ENCODE measurements at regions of chr19 and their contacts with region 1.

Region 1: GRCh38 chr19:51407511-51408131 is 9.8 kb downstream of the SIGLEC10 start:
- DNase-seq: no peak
- ATAC-seq: peak; percentile 68
- H3K4me3 ChIP-seq: no peak overlapping the region
- H3K27ac ChIP-seq: no peak overlapping the region
- H3K4me1 ChIP-seq: no peaks in the 10 kb centered on the region; the same call in 1 of the 2 replicates
- H3K27me3 ChIP-seq: no peaks in the 10 kb centered on the region
- CTCF ChIP-seq: peak; percentile 72

Region 2: DNA sequence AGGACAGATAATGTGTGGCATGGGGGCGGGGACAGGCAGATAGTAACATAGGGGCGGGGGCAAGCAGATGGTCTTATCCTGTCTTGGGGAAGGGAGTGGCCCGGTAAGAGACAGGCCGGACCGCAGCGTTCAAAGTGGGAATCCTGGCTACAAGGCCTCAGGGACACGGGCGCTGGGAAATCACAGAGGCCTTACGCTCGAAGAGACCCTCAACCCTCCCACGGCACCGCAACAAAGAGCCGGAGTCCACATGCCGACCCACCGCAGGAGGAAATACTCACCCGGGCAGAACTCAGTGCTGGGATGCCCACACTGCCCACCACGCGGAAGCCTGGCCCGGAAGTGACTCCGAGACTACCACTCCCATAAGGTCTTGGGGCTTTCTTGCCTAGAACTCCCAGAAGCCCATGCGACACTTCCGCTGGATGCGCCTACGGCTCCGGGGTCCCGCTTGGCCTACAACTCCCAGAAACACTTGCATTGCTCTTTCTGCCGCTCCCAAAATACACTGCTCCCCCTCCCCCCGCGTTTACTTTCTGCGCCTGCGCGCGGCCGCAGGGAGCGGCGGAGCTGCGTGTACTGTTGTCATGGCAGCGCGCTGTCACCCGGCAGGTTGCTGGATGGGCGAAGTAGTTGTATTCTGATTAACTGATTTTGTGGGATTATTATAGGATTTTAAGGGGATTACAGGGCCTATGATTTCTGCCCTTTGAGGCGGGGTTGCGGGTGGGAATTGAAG is 299.4 kb before region 1 on chr19 and contains the start of gene CTU1:
- CTCF ChIA-PET with region 1: no interaction called
- POLR2A ChIA-PET with region 1: interaction called, 11 read pairs
- in situ Hi-C with region 1: no loop called
- intact Hi-C with region 1: no loop called
- DNase-seq: peak; percentile 88
- ATAC-seq: peak; percentile 99
- H3K4me3 ChIP-seq: peak within 1 kb of the TSS; percentile 76 to 79
- H3K27ac ChIP-seq: peak within 1 kb of the TSS; percentile 78
- H3K4me1 ChIP-seq: 0 out of 2 replicates have a peak, but pooled peaks cover 3% of the 10 kb centered on the region
- H3K27me3 ChIP-seq: no peaks in the 10 kb centered on the region; the same call in 1 of the 2 replicates
- CTCF ChIP-seq: no peak
- total RNA-seq, gene CTU1: 9.3 TPM

Region 3: DNA sequence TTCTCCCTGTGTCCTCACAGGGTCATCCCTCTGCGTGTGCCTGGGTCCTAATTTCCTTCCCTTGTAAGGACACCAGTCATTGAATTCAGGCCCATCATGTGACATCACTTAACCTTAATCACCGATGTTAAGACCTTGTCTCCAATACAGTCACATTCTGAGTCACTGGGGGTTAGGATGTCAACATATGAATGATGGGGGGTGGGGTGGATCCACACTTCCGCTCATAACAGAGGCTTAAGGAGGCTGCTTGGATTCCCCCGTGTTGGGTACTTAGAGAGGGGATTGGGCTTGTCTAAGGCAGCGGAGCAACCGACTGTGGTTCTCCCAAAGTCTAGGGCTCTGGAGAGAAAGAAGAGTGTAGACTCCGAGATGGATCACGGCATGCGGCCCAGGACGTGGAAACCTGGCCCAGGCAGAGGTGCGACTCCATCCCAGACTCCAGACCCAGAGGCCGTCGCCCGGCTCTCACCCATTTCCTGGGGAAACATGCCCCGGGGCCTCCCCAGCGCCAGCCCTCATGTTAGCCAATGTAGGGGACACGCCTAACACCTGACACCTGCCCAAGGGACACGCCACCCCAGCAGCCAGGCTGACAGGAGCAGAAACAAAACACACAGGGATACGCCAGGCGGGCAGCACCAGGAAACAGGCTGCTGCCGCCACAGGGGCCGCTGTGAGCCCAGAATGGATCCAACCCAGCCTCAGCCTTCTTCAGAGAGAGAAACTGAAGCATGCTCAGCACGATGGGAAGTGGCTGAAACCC is 113.2 kb before region 1 on chr19:
- CTCF ChIA-PET with region 1: no interaction called
- POLR2A ChIA-PET with region 1: no interaction called
- in situ Hi-C with region 1: no loop called
- intact Hi-C with region 1: no loop called
- DNase-seq: no peak
- ATAC-seq: no peak
- H3K4me3 ChIP-seq: no peak overlapping the region
- H3K27ac ChIP-seq: no peak overlapping the region
- H3K4me1 ChIP-seq: no peaks in the 10 kb centered on the region
- H3K27me3 ChIP-seq: no peaks in the 10 kb centered on the region; the same call in 1 of the 2 replicates
- CTCF ChIP-seq: no peak

Region 4: GRCh38 chr19:51311351-51312257 is 96.0 kb before region 1 on chr19 and contains the start of gene IGLON5:
- CTCF ChIA-PET with region 1: no interaction called
- POLR2A ChIA-PET with region 1: no interaction called
- in situ Hi-C with region 1: no loop called
- intact Hi-C with region 1: no loop called
- DNase-seq: no peak
- ATAC-seq: no peak
- H3K4me3 ChIP-seq: no peak within 1 kb of the TSS
- H3K27ac ChIP-seq: no peak within 1 kb of the TSS
- H3K4me1 ChIP-seq: no peaks in the 10 kb centered on the region
- H3K27me3 ChIP-seq: no peaks in the 10 kb centered on the region; the same call in 1 of the 2 replicates
- CTCF ChIP-seq: no peak
- total RNA-seq, gene IGLON5: 0.13 TPM